Endothelial cell of umbilical vein (primary cell): ENCODE measurements at regions of chr13 and their contacts with region 1.

Region 1: DNA sequence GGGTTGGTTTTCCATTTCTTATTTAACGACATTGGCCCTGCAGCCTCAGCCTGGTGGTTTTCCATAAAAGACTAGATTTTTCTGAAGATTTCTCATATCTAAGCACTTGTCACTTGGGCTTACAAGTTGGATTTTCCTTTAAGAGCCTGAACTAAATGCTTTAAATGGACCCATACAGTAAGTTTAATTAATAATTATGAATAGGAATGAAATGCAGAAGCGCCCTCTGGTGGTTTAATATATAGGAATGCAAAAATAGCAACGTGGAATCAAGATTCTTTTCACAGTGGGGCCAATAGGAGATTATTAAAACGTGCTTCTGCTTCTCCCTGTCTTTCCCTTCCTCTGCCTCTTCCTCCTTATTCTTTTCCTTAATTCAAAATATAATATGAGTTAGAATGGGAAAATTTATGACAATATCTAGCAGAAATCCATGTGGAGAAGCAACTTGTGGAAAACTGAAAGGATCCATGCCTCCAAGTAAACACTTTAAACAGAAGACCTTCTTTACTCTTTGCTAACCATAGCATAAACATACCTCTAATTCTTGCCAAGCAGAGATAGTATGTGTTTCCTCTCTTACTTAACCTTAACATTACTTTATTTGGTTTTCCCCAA is 324.0 kb downstream of the GPC5 start:
- DNase-seq: peak; percentile 10
- H3K4me3 ChIP-seq: no peak overlapping the region
- H3K27ac ChIP-seq: no peak overlapping the region
- H3K4me1 ChIP-seq: no peaks in the 10 kb centered on the region
- H3K27me3 ChIP-seq: no peaks in the 10 kb centered on the region
- CTCF ChIP-seq: peak; percentile 21 to 31
- POLR2A ChIP-seq: no peak

Region 2: DNA sequence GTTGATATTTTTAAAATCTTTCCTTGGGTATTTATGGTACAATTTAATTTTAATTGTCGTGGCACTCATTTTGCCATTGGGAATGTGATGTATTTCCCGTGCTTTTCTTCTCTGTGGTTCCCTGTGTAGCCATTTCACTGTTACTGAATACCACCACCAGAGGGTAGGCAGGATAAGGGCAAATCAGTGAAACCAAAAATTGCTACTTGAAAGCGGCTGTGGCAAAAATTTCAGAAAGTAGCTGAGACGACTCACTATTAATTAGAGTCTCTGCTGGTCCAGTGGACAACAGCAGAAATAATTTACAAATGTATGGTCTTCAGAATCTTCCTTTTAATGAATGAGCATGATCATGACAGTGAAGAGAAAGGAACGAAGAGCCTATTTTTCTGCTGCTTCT is 409.3 kb before region 1 on chr13:
- CTCF ChIA-PET with region 1: interaction called, 4 read pairs
- POLR2A ChIA-PET with region 1: no interaction called
- dilution Hi-C with region 1: no loop called
- intact Hi-C with region 1: loop called (anchors 2 kb)
- DNase-seq: peak; percentile 51
- H3K4me3 ChIP-seq: no peak overlapping the region
- H3K27ac ChIP-seq: no peak overlapping the region
- H3K4me1 ChIP-seq: no peaks in the 10 kb centered on the region
- H3K27me3 ChIP-seq: peaks cover 4 to 20% of the 10 kb centered on the region in 2 experiments
- CTCF ChIP-seq: peak; percentile 31 to 48
- POLR2A ChIP-seq: no peak

Region 3: DNA sequence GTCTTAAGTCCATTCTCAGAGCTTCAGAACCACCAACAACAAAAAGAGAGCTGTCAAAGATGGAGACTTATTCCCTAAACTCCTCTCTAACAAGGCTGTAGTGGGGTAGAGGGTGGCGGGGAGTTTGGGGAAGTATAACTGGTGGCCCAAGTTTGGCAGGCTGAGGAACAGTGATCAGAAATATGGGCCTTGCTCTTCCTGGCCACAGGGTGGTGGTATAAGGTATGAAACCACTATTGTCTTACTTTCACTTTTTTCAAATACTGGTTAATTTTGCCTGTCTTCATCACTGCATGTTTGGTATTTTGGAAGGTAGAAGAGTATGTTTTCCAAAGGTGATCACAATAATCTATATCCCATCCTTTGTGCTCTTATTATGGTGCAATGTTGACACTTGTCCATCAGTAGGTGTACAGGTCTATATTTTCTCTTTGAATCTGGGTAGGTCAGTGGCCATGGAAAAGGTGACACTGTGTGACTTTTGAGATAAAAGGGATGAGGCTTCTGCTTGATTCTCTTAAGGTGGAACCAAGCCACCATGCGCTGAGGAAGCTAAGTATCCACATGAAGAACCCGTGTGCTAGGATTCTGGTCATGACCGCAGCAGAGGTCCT is 347.2 kb before region 1 on chr13:
- CTCF ChIA-PET with region 1: no interaction called
- POLR2A ChIA-PET with region 1: no interaction called
- dilution Hi-C with region 1: no loop called
- intact Hi-C with region 1: loop called (anchors 1 kb)
- DNase-seq: no peak
- H3K4me3 ChIP-seq: no peak overlapping the region
- H3K27ac ChIP-seq: no peak overlapping the region
- H3K4me1 ChIP-seq: no peaks in the 10 kb centered on the region
- H3K27me3 ChIP-seq: peaks cover 0 to 8% of the 10 kb centered on the region in 2 experiments
- CTCF ChIP-seq: peak; percentile 23 to 45
- POLR2A ChIP-seq: no peak

Region 4: DNA sequence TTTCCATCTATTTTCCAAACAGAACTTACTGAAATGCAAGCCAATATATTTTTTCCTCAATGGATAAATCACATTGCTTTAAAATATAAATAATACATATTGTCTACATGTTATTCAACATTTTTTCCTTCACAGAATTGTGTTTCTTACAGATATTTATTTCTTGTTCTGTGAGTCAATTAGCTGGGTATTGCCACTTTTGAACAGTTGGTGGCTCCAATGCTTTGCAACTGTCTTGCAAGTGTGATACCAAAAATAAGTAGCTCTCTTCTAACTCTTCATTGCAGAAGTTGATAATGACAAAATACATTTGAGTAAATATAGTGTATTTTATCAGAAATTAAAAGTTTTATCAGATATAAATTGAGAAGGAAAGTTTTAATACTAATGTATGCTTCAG is 341.0 kb before region 1 on chr13:
- CTCF ChIA-PET with region 1: interaction called, 25 read pairs
- POLR2A ChIA-PET with region 1: no interaction called
- dilution Hi-C with region 1: no loop called
- intact Hi-C with region 1: loop called (anchors 1 kb)
- DNase-seq: peak; percentile 22
- H3K4me3 ChIP-seq: no peak overlapping the region
- H3K27ac ChIP-seq: no peak overlapping the region
- H3K4me1 ChIP-seq: no peaks in the 10 kb centered on the region
- H3K27me3 ChIP-seq: peaks cover 4 to 8% of the 10 kb centered on the region in 2 experiments
- CTCF ChIP-seq: no peak
- POLR2A ChIP-seq: no peak

Region 5: DNA sequence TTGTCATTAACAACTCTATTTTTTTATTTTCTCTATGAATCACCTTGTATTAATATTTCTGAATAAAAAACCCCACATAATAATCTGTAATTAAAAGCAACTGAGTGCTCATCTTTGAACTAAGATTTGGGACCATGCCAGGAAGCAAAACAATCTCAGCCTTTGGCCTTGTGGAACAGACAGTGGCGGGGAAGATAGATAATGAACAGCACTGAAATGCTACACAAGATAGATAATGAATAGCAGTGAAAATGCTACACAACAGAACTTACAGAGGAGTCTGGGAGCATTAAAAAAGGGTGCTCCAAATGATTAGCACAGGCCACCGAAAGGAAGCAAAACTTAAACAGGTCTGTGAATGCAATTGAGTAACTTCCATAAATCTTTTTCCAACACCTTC is 189.0 kb before region 1 on chr13:
- CTCF ChIA-PET with region 1: no interaction called
- POLR2A ChIA-PET with region 1: no interaction called
- dilution Hi-C with region 1: no loop called
- intact Hi-C with region 1: no loop called
- DNase-seq: no peak
- H3K4me3 ChIP-seq: no peak overlapping the region
- H3K27ac ChIP-seq: no peak overlapping the region
- H3K4me1 ChIP-seq: no peaks in the 10 kb centered on the region
- H3K27me3 ChIP-seq: no peaks in the 10 kb centered on the region
- CTCF ChIP-seq: no peak
- POLR2A ChIP-seq: no peak

Region 6: DNA sequence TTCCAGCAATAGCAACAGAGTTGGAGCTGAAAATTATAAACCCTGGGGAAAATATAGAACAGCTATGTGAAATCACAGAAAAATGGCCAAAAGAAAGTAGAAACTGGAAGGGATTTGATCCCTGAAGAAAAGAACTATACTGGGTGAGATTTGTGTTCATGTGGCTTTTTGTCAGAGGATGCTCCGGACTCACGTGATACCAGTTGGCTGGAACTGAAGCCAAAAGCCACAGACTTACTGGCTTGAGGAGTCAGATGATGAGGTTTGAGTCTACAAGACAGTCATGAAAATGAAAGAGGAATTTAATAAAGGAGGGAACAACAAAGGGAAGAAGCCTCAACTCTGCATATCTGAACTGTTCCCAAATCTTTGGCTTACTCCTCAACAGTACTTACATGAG is 103.1 kb after region 1 on chr13:
- CTCF ChIA-PET with region 1: no interaction called
- POLR2A ChIA-PET with region 1: no interaction called
- dilution Hi-C with region 1: no loop called
- intact Hi-C with region 1: no loop called
- DNase-seq: no peak
- H3K4me3 ChIP-seq: no peak overlapping the region
- H3K27ac ChIP-seq: no peak overlapping the region
- H3K4me1 ChIP-seq: no peaks in the 10 kb centered on the region
- H3K27me3 ChIP-seq: no peaks in the 10 kb centered on the region
- CTCF ChIP-seq: no peak
- POLR2A ChIP-seq: no peak